CD4-positive, alpha-beta T cell (primary cell): ENCODE measurements at regions of chr2 and their contacts with region 1.

Region 1: GRCh38 chr2:28681158-28681571 is 70.5 kb upstream of the PPP1CB start:
- DNase-seq: peak; percentile 20 to 90 (median 38)
- ATAC-seq: peak; percentile 91
- H3K4me3 ChIP-seq: no peak overlapping the region
- H3K4me3 Mint-ChIP-seq: no peak overlapping the region
- H3K27ac ChIP-seq: peak overlapping the region in 1 of 2 donors; percentile 41
- H3K27ac Mint-ChIP-seq: peak overlapping the region; percentile 6
- H3K4me1 ChIP-seq: peaks cover 31% of the 10 kb centered on the region
- H3K4me1 Mint-ChIP-seq: peaks cover 28% of the 10 kb centered on the region
- H3K27me3 ChIP-seq: no peaks in the 10 kb centered on the region
- H3K27me3 Mint-ChIP-seq: no peaks in the 10 kb centered on the region
- CTCF ChIP-seq: no peak

Region 2: DNA sequence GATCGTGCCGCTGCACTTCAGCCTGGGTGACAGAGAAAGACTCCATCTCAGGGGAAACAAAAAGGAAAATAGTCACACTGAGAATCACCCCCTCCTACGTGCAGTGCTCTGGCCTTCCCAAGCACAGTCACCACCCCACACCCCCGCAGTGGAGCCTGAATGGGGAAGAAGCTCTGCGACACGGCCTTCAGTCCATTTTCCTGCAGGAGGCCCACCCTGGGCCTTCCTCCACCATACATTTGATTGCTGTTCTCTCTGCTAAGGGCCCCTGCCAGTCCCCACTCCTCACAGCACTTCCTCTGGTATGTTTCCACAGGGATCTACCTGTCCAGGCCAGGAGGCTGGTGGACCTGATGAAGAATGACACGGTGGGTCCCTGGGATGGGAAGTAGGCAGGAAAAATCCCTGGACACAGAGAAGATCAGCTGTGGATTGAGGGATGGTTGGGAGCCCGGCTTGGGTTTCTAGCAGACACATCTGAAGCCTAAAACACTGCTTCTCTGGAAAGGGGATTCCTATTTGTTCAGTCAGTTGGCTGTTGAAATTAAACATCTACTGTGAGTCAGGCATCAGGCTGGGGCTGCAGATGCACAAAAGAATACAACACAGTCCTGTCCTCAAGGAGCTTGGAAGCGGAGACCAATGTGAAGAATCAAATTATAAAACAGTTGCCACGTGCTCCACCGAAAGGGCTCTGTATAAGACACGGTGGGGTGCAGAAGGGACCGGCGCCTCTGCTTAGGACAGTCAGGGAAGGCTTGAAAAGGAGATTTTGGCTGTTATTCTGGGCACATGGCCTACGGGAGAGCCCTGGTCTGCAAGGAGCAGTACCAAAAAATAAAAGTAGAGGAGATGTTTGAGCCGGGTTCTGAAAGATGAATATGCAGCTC is 103.1 kb before region 1 on chr2:
- CTCF ChIA-PET with region 1: no interaction called
- POLR2A ChIA-PET with region 1: no interaction called
- intact Hi-C with region 1: no loop called
- DNase-seq: no peak
- ATAC-seq: no peak
- H3K4me3 ChIP-seq: no peak overlapping the region
- H3K4me3 Mint-ChIP-seq: no peak overlapping the region
- H3K27ac ChIP-seq: no peak overlapping the region
- H3K27ac Mint-ChIP-seq: no peak overlapping the region
- H3K4me1 ChIP-seq: no peaks in the 10 kb centered on the region
- H3K4me1 Mint-ChIP-seq: no peaks in the 10 kb centered on the region
- H3K27me3 ChIP-seq: no peaks in the 10 kb centered on the region
- H3K27me3 Mint-ChIP-seq: no peaks in the 10 kb centered on the region
- CTCF ChIP-seq: no peak

Region 3: DNA sequence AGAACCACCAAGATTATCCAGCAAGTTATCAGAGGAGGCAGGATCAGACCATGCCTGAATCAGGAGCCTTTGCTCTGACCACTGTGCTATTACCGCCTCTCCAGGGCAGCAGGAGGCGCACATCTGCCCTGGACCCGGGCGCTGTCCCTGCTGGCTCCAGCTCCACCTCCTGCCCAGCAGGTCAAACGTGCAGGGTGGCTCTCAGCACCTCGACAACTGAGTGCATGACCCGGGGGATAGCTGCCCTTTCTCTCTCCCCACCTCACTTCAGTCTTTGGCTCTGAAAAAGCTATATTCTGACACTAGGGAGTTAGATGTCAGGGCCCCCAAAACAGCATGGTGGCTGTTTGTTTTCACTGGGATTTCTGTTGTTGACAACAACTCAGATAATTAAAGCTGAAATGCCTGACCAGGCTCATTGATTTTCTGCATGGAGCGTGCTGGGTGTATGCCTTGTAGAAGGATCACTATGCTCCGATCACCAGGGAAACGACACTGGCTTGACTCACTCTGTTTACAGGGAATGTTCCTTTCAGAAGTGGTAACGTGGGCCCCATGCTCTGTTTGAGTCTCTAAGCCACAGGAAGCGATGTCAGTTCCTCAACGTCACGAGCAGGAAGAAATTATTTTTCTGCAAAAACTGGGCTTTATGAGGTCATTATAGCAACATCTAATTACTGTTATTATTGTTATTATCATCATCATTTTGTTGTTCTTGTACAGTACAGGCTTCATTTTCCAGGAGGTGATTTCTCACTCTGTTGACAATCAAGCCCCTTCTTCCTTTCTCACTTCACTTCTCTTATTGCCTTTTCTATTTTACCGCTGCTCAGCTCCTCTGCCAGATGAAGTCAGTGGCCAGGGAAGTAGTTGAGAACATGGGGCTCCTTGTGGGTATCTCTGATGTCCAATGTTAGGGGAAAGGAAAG is 59.7 kb before region 1 on chr2:
- CTCF ChIA-PET with region 1: interaction called, 3 read pairs
- POLR2A ChIA-PET with region 1: no interaction called
- intact Hi-C with region 1: loop called in 1 of 2 experiments (anchors 10 kb)
- DNase-seq: peak; percentile 55 to 96 (median 69)
- ATAC-seq: peak; percentile 86
- H3K4me3 ChIP-seq: peak overlapping the region; percentile 15
- H3K4me3 Mint-ChIP-seq: peak overlapping the region; percentile 76
- H3K27ac ChIP-seq: peak overlapping the region; percentile 93 to 98
- H3K27ac Mint-ChIP-seq: no peak overlapping the region
- H3K4me1 ChIP-seq: peaks cover 95% of the 10 kb centered on the region
- H3K4me1 Mint-ChIP-seq: peaks cover 86% of the 10 kb centered on the region
- H3K27me3 ChIP-seq: no peaks in the 10 kb centered on the region
- H3K27me3 Mint-ChIP-seq: no peaks in the 10 kb centered on the region
- CTCF ChIP-seq: no peak

Region 4: DNA sequence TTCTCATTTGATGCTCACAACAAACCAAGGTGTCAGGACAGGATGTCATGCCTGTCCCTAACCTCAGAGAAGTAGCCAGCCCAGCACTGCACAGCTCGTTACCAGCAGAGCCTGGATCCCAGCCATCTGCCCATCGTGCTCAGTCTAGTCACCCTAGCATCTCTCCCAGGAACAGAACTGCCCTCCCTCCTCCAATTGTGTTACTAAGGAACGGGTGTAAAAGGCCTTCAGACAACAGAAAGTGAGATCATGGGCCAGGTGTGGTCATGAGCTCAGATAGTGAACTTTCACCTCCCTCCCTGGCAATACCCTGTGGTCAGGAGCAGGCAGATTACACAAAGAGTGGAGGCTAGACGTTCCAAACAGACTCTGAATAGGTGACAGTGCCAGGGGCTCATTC is 41.3 kb before region 1 on chr2:
- CTCF ChIA-PET with region 1: no interaction called
- POLR2A ChIA-PET with region 1: no interaction called
- intact Hi-C with region 1: loop called in 1 of 2 experiments (anchors 5 kb)
- DNase-seq: no peak
- ATAC-seq: no peak
- H3K4me3 ChIP-seq: no peak overlapping the region
- H3K4me3 Mint-ChIP-seq: no peak overlapping the region
- H3K27ac ChIP-seq: no peak overlapping the region
- H3K27ac Mint-ChIP-seq: no peak overlapping the region
- H3K4me1 ChIP-seq: no peaks in the 10 kb centered on the region
- H3K4me1 Mint-ChIP-seq: no peaks in the 10 kb centered on the region
- H3K27me3 ChIP-seq: no peaks in the 10 kb centered on the region
- H3K27me3 Mint-ChIP-seq: no peaks in the 10 kb centered on the region
- CTCF ChIP-seq: no peak

Region 5: DNA sequence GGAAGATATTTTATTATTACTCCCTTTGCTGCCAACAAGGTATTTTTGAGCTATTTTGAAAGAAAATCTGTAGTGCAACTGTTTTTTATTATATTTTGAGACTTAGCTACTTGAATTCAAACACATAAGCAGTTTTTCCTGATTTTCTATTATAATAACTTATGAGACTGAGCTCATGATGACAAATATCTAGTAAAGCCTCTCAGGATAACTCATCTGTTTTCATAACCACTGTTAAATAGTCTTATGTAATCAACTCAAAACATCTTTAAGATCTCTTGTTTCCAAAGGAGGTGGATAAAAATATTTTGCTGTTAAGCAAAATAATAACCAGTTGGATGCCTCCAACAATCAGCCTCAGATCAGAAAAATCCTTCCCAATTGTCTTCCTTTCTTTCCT is 48.5 kb after region 1 on chr2:
- CTCF ChIA-PET with region 1: no interaction called
- POLR2A ChIA-PET with region 1: no interaction called
- intact Hi-C with region 1: no loop called
- DNase-seq: no peak
- ATAC-seq: no peak
- H3K4me3 ChIP-seq: no peak overlapping the region
- H3K4me3 Mint-ChIP-seq: no peak overlapping the region
- H3K27ac ChIP-seq: no peak overlapping the region
- H3K27ac Mint-ChIP-seq: no peak overlapping the region
- H3K4me1 ChIP-seq: peaks cover 3% of the 10 kb centered on the region
- H3K4me1 Mint-ChIP-seq: no peaks in the 10 kb centered on the region
- H3K27me3 ChIP-seq: no peaks in the 10 kb centered on the region
- H3K27me3 Mint-ChIP-seq: no peaks in the 10 kb centered on the region
- CTCF ChIP-seq: no peak

Region 6: DNA sequence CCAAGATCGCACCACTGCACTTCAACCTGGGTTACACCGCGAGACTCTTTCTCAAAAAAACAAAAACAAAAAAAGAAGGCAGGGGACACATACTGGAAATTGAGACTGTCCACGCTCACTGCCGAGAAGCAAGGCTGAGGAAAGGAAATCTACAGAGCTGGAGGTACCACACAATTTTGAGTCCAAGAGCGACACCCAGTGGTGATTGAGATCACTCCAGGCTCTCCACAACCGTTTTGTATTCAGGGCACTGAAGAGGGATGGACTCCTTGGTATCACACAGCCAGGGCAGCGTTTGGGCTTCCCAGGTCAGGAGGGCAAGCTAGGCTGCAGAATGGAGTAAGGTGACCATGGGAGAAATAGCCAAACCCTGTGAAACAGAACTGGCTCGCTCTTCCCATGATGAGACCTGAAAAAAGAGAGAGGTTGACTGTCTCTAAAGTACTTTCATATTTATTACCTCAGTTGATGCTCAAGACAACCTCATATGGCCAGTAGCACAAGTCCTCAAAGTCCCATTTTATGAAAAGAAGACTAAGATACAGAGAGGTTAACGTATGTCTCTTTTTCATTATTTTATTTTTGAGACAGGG is 1391.2 kb after region 1 on chr2:
- CTCF ChIA-PET with region 1: no interaction called
- POLR2A ChIA-PET with region 1: no interaction called
- intact Hi-C with region 1: no loop called
- DNase-seq: peak; percentile 17 to 75 (median 46)
- ATAC-seq: peak; percentile 71
- H3K4me3 ChIP-seq: no peak overlapping the region
- H3K4me3 Mint-ChIP-seq: no peak overlapping the region
- H3K27ac ChIP-seq: no peak overlapping the region
- H3K27ac Mint-ChIP-seq: no peak overlapping the region
- H3K4me1 ChIP-seq: peaks cover 3% of the 10 kb centered on the region
- H3K4me1 Mint-ChIP-seq: no peaks in the 10 kb centered on the region
- H3K27me3 ChIP-seq: peaks cover 17 to 21% of the 10 kb centered on the region in 2 experiments
- H3K27me3 Mint-ChIP-seq: peaks cover 45% of the 10 kb centered on the region
- CTCF ChIP-seq: peak; percentile 58